Gastrocnemius medialis (tissue), 4 donors: ENCODE measurements at regions of chr20 and their contacts with region 1.

Region 1: DNA sequence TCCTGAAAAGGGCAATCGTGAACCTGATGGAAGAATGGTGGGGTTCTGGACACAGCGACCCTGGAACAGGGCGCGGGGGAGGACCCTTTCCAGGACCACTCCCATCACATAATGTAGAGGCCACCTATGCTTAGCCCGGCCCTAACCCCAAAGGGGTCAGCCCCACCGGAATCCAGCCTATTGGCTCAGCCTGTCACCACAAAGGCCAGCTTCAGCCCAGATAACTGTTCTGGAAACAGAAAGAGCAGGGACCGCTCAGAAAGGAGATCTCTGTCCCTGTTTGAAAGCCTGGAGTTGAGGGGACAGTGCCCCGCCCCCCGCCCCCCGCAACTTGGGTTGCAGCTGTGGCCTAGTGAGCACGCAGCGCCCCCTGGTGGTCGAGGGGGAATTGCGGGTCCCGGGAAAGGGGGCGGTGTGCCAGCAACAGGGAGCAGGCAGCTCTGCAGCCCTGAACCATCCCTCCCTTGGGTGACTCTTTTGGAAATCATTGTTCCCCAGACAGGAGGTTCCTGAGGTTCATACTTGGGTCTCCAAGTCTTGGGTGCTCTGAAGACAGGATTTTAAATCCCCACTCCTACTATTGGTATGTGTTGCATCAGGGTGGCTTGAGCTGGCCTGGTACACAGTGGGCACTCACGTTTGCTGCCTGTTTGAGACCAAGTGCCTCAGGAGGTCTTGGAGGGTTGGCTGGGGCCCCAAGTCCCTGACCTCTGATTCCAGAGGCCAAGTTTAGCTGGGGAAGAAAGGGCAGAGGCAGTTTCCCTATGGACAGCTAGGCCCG is 1.5 kb downstream of the SIGLEC1 start:
- DNase-seq: peak; percentile 40 to 53
- ATAC-seq: no peak
- H3K4me3 ChIP-seq: peak overlapping the region in 1 of 4 donors; percentile 10
- H3K27ac ChIP-seq: peak overlapping the region in 1 of 4 donors; percentile 24
- H3K4me1 ChIP-seq: peaks cover 5 to 16% of the 10 kb centered on the region in 2 donors
- H3K27me3 ChIP-seq: no peaks in the 10 kb centered on the region
- CTCF ChIP-seq: peak; percentile 94 to 98 (median 97)
- POLR2A ChIP-seq: no peak

Region 2: GRCh38 chr20:2859330-2860121 is 851.4 kb before region 1 on chr20:
- in situ Hi-C with region 1: no loop called
- intact Hi-C with region 1: no loop called
- DNase-seq: no peak
- ATAC-seq: peak in 1 of 2 donors; percentile 26
- H3K4me3 ChIP-seq: no peak overlapping the region
- H3K27ac ChIP-seq: no peak overlapping the region
- H3K4me1 ChIP-seq: peaks cover 0 to 10% of the 10 kb centered on the region in 2 donors
- H3K27me3 ChIP-seq: no peaks in the 10 kb centered on the region
- CTCF ChIP-seq: no peak
- POLR2A ChIP-seq: no peak

Region 3: DNA sequence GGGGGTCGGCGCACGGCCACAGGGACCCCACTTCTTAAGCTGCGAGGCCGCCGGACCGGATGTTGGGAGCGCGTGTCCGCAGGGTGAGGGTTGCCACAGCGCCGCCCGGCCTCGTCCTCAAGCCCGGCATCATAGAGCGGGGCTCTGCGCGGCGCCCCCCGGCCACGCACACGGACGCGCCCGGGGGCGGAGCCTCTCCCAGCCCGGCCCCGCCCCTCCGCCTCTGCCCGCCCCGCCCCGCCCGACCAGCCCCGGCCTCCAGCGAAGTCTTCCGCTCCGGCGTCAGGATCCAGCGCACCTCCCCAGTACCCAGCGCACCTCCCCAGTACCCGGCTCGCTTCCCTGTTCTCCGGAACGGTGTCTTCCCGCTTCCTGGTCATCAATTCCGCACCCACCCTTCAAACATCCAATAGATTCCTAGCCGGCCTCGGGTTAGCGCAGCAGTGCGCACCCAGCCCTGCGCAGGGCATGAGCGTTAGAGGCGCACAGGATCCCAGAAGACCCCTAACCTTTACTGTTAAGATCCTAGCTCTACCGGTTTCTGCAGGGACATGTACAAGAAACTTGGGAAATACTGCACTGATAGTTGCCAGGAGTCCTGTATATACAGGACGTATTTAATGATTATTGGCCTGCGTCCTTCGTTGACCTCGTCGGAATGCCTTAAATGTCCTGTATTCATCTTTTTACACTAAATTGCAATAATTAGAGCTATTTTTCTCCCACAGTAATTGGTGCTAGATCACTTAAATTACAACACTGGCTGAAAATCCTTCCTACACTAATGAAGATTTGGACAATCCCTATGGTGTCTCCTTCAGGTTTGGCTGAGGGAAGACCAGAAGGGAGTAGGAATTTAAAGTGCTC is 302.9 kb before region 1 on chr20:
- in situ Hi-C with region 1: no loop called
- intact Hi-C with region 1: no loop called
- DNase-seq: peak; percentile 28 to 54
- ATAC-seq: peak; percentile 67 to 74
- H3K4me3 ChIP-seq: peak overlapping the region; percentile 68 to 86 (median 78)
- H3K27ac ChIP-seq: peak overlapping the region; percentile 81 to 89 (median 83)
- H3K4me1 ChIP-seq: peaks cover 4 to 11% of the 10 kb centered on the region in 2 donors
- H3K27me3 ChIP-seq: no peaks in the 10 kb centered on the region
- CTCF ChIP-seq: no peak
- POLR2A ChIP-seq: peak; percentile 32 to 44

Region 4: GRCh38 chr20:3659492-3660261 is 51.2 kb before region 1 on chr20:
- in situ Hi-C with region 1: loop called in 1 of 4 experiments (anchors 10 kb)
- intact Hi-C with region 1: no loop called
- DNase-seq: no peak
- ATAC-seq: no peak
- H3K4me3 ChIP-seq: no peak overlapping the region
- H3K27ac ChIP-seq: no peak overlapping the region
- H3K4me1 ChIP-seq: no peaks in the 10 kb centered on the region
- H3K27me3 ChIP-seq: peaks cover 15 to 23% (median 19%) of the 10 kb centered on the region in 3 donors
- CTCF ChIP-seq: no peak
- POLR2A ChIP-seq: no peak

Region 5: GRCh38 chr20:3679749-3680700 is 30.9 kb before region 1 on chr20:
- in situ Hi-C with region 1: loop called in 2 of 4 experiments (anchors 5 kb)
- intact Hi-C with region 1: loop called (anchors 1 kb)
- DNase-seq: no peak
- ATAC-seq: no peak
- H3K4me3 ChIP-seq: peak overlapping the region in 1 of 4 donors; percentile 57
- H3K27ac ChIP-seq: peak overlapping the region; percentile 63 to 70 (median 66)
- H3K4me1 ChIP-seq: peaks cover 0 to 13% of the 10 kb centered on the region in 2 donors
- H3K27me3 ChIP-seq: peaks cover 5 to 23% (median 9%) of the 10 kb centered on the region in 3 donors
- CTCF ChIP-seq: no peak
- POLR2A ChIP-seq: no peak

Region 6: DNA sequence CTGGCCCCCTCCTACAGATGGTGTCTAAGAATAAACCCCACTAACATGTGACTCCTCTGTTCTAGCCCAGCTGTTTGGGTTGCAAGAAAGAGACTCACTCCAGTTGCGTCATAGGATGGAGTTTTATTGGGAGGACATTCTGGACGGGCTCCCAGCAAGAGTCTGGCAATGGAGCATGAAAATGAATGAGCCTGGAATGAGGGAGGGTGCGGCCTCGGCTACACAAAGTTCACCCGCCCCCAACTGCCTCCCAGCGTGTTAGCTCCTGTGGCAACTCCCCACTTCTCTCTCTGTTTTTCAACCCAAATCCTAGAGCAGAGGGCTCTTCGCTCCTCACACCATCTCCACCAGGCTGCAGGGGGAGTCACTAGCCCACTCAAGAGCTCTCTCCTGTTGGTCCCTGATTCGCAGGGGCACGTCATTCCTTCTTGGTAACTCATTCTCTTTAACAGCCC is 24.0 kb before region 1 on chr20:
- in situ Hi-C with region 1: no loop called
- intact Hi-C with region 1: loop called (anchors 1 kb)
- DNase-seq: peak; percentile 80 to 90
- ATAC-seq: peak; percentile 99
- H3K4me3 ChIP-seq: peak overlapping the region in 1 of 4 donors; percentile 5
- H3K27ac ChIP-seq: peak overlapping the region; percentile 57 to 76 (median 72)
- H3K4me1 ChIP-seq: peaks cover 14 to 16% of the 10 kb centered on the region in 2 donors
- H3K27me3 ChIP-seq: peaks cover 3 to 10% (median 5%) of the 10 kb centered on the region in 3 donors
- CTCF ChIP-seq: peak in 1 of 5 experiments; percentile 5
- POLR2A ChIP-seq: no peak